PC-9 (cell line): ENCODE measurements at regions of chr11 and their contacts with region 1.

Region 1: DNA sequence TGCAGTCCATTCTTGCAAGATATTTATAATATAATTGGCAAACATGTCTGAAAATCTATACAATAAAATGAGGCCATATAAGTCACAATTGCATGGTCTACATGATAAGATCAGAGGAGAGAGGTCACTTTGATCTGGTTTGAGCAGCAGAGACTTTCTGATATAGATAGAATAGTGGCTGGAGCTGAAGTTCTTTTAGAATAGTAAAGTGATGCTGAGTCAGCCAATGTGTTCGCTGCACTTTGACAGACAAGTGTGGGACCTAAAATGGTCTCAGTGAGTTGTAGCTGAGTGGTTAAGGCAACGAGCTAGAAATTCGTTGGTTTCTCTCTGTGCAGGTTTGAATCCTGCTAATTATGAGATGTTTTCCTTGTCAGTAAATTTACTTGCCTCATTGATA is 257.0 kb upstream of the C11orf87 start:
- DNase-seq: peak in 1 of 2 experiments; percentile 19
- H3K4me3 ChIP-seq: no peak overlapping the region
- H3K27ac ChIP-seq: no peak overlapping the region
- H3K4me1 ChIP-seq: no peaks in the 10 kb centered on the region
- H3K27me3 ChIP-seq: 0 out of 2 replicates have a peak, but pooled peaks cover 4% of the 10 kb centered on the region
- CTCF ChIP-seq: no peak

Region 2: GRCh38 chr11:109112261-109112660 is 52.8 kb before region 1 on chr11:
- CTCF ChIA-PET with region 1: interaction called, 11 read pairs
- POLR2A ChIA-PET with region 1: no interaction called
- intact Hi-C with region 1: no loop called
- DNase-seq: no peak
- H3K4me3 ChIP-seq: no peak overlapping the region
- H3K27ac ChIP-seq: no peak overlapping the region
- H3K4me1 ChIP-seq: no peaks in the 10 kb centered on the region
- H3K27me3 ChIP-seq: no peaks in the 10 kb centered on the region; the same call in 1 of the 2 replicates
- CTCF ChIP-seq: no peak